Panc1 (cell line): ENCODE measurements at regions of chr15 and their contacts with region 1.

Region 1: DNA sequence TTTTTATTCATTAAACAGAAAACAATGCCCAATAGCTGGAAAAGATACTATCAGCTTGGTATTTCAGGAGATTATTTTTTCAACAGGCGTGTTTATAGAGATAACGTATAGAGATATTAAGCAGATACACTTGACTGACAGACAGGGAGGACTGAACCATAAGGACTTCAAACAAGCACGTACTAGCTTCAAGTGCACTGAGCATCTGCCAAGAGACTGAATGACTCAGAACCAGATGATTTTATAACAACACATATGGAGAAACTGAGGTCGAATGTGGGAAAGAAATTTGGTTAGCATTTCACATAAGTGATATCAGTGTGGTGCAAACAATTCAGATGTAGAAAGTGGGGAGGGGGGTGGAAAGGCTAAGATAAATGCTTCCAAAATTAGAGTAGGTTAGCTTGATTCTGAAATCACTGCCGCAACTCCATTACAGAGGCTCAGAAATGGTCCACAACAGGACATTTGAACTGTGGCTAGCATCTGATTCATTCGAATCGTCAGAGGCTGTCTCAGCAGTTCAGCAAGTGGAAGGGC is 103.5 kb downstream of the SEMA6D start:
- DNase-seq: no peak
- ATAC-seq: no peak
- H3K4me3 ChIP-seq: no peak overlapping the region
- H3K27ac ChIP-seq: no peak overlapping the region
- H3K4me1 ChIP-seq: no peaks in the 10 kb centered on the region
- H3K27me3 ChIP-seq: no peaks in the 10 kb centered on the region
- CTCF ChIP-seq: no peak

Region 2: DNA sequence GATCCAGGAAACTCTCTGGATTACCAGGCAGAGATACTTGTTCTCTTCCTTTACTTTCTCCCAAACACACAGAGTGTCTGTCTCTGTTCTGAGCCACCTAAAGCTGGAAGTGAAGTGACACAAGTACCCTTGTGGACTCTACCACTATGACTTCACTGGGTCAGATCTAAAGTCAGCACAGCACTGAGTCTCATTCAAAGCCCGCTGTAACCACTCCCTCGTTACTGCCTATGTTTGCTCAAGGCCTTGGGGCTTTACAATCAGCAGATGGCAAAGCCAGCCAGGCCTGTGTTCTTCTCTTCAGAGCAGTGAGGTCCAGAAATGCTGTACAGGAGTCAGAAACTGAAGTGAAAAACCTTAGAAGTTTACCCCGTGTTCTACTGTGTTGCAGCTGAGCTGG is 691.8 kb before region 1 on chr15:
- CTCF ChIA-PET with region 1: no interaction called
- POLR2A ChIA-PET with region 1: interaction called, 14 read pairs
- in situ Hi-C with region 1: no loop called
- intact Hi-C with region 1: no loop called
- DNase-seq: no peak
- ATAC-seq: no peak
- H3K4me3 ChIP-seq: no peak overlapping the region
- H3K27ac ChIP-seq: no peak overlapping the region
- H3K4me1 ChIP-seq: no peaks in the 10 kb centered on the region
- H3K27me3 ChIP-seq: no peaks in the 10 kb centered on the region
- CTCF ChIP-seq: no peak